Mucosa of descending colon (tissue), 3 donors: ENCODE measurements at regions of chr14 and their contacts with region 1.

Region 1: GRCh38 chr14:73728717-73729330 is 14.6 kb upstream of the PNMA1 start:
- DNase-seq: peak; percentile 87 to 96 (median 94)
- ATAC-seq: peak; percentile 94
- H3K4me3 ChIP-seq: no peak overlapping the region
- H3K4me1 ChIP-seq: peaks cover 31% of the 10 kb centered on the region
- CTCF ChIP-seq: peak; percentile 87

Region 2: DNA sequence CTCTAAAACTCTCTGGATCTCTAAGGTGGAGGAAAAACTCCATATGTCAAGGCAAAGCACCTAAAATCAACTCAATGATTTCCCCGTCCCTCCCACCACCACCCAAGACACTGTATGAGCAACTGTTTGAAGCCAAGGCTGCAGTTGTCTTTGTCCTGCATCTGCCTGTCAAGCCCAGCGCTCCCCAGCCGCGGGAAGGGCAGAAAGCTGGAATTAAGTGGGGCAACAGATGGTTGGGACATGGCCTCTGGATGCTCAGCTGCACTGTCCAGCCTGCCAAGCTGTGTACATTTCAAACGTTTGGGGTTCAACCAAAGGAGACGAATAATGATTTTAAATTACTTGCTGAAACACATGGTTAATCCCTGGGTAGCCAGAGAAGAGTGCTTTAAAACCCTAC is 80.6 kb after region 1 on chr14:
- intact Hi-C with region 1: no loop called
- DNase-seq: no peak
- ATAC-seq: no peak
- H3K4me3 ChIP-seq: no peak overlapping the region
- H3K4me1 ChIP-seq: peaks cover 6% of the 10 kb centered on the region
- CTCF ChIP-seq: no peak

Region 3: DNA sequence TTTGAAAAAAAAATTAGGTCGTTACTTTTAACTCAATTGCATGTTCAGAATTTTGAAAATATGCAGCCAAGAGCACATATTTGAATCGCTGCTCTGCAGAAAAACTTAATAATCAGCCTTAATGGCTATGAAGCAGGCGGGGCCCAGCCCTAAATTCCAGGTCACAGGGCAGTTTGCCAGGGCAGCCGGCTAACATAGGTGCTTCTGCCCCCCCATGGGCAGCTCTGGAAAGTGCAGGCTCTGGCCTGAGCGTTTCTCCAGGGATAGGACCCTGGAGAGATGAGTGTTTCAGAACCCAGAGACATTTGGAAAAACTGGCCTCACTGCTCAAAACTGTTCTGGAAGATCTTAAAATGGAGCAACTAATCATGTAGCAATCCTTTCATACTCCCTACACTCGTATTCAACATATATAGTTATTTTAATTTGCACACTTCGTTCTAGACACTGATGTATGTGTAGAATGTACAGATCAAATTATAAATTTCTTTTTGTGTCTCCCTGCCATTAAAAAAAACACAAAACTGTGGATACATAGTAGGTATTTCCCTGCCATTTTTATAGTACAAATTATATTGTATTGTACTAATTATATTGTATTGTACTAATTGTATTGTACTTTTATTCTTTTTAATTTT is 96.8 kb after region 1 on chr14:
- intact Hi-C with region 1: loop called (anchors 5 kb)
- DNase-seq: peak; percentile 90 to 98 (median 91)
- ATAC-seq: peak; percentile 97
- H3K4me3 ChIP-seq: no peak overlapping the region
- H3K4me1 ChIP-seq: peaks cover 14% of the 10 kb centered on the region
- CTCF ChIP-seq: peak; percentile 82